ENCODE measurements at regions of chr10 and their contacts with region 1.

Region 1: DNA sequence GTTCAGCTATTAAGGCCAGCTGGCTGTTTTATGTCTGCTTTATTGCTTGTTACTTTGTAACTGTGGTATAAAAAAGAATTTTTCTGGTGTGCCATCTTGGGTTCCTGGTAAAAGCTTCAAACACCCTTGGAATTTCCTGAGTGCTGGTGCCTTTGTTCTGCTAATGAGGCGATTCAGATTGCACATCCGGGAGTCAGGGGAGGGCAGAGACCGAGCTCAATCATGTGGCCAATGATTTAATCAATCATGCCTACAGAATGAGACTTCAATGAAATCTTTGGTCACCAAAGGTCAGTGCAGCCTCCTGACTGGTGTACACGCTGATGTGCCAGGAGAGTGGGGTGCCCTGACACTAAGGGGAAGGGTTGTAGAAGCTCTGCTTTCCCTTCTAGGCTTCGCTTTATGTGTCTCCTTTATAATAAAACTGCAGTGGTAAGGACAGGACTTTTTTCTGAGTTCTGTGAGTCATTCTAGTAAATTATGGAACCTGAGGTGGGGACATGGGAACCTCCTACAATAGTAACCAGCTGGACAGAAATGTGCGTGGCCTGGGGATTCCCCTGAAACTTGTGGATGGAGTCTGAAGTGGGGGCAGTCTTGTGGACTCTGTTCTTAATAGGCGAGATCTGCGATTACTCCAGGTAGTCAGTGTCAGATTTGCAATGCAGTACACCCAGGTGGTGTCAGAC is 69.4 kb upstream of the OGDHL start:
- DNase-seq: peak; percentile 88
- H3K4me3 ChIP-seq: peak overlapping the region in 1 of 3 experiments; percentile 22
- H3K27ac ChIP-seq: peak overlapping the region; percentile 90
- H3K4me1 ChIP-seq: peaks cover 30% of the 10 kb centered on the region
- H3K27me3 ChIP-seq: no peaks in the 10 kb centered on the region
- CTCF ChIP-seq: no peak
- POLR2A ChIP-seq: peak; percentile 17

Region 2: GRCh38 chr10:49552249-49552672 is 279.2 kb before region 1 on chr10:
- CTCF ChIA-PET with region 1: no interaction called
- POLR2A ChIA-PET with region 1: no interaction called
- dilution Hi-C with region 1: no loop called
- intact Hi-C with region 1: loop called (anchors 1 kb)
- DNase-seq: peak; percentile 83
- H3K4me3 ChIP-seq: peak overlapping the region in 1 of 3 experiments; percentile 32
- H3K27ac ChIP-seq: peak overlapping the region; percentile 99
- H3K4me1 ChIP-seq: peaks cover 42% of the 10 kb centered on the region
- H3K27me3 ChIP-seq: no peaks in the 10 kb centered on the region
- CTCF ChIP-seq: no peak
- POLR2A ChIP-seq: no peak

Region 3: GRCh38 chr10:49679480-49679893 is 152.0 kb before region 1 on chr10 and contains the start of gene C10orf53:
- CTCF ChIA-PET with region 1: no interaction called
- POLR2A ChIA-PET with region 1: no interaction called
- dilution Hi-C with region 1: no loop called
- intact Hi-C with region 1: no loop called
- DNase-seq: peak; percentile 32
- H3K4me3 ChIP-seq: no peak within 1 kb of the TSS
- H3K27ac ChIP-seq: no peak within 1 kb of the TSS
- H3K4me1 ChIP-seq: peaks cover 3% of the 10 kb centered on the region
- H3K27me3 ChIP-seq: peaks cover 6 to 29% of the 10 kb centered on the region in 2 experiments
- CTCF ChIP-seq: no peak
- POLR2A ChIP-seq: no peak
- total RNA-seq, gene C10orf53: not detected in 2 replicates

Region 4: GRCh38 chr10:49817845-49818244 is 13.7 kb before region 1 on chr10:
- CTCF ChIA-PET with region 1: interaction called, 3 read pairs
- POLR2A ChIA-PET with region 1: no interaction called
- dilution Hi-C with region 1: no loop called
- intact Hi-C with region 1: loop called (anchors 2 kb)
- DNase-seq: peak; percentile 66
- H3K4me3 ChIP-seq: no peak overlapping the region
- H3K27ac ChIP-seq: no peak overlapping the region
- H3K4me1 ChIP-seq: peaks cover 14% of the 10 kb centered on the region
- H3K27me3 ChIP-seq: no peaks in the 10 kb centered on the region
- CTCF ChIP-seq: no peak
- POLR2A ChIP-seq: no peak

Measured in endothelial cell of umbilical vein (primary cell).